ENCODE measurements at regions of chr22 and their contacts with region 1.

Region 1: GRCh38 chr22:34414484-34415440 is 494.5 kb upstream of the LARGE1 start:
- DNase-seq: peak; percentile 69
- H3K4me3 ChIP-seq: no peak overlapping the region
- H3K27ac ChIP-seq: no peak overlapping the region
- H3K4me1 ChIP-seq: no peaks in the 10 kb centered on the region
- CTCF ChIP-seq: peak; percentile 80

Region 2: GRCh38 chr22:35023692-35024363 is 609.1 kb after region 1 on chr22:
- CTCF ChIA-PET with region 1: no interaction called
- POLR2A ChIA-PET with region 1: no interaction called
- intact Hi-C with region 1: loop called (anchors 10 kb)
- DNase-seq: peak; percentile 58
- H3K4me3 ChIP-seq: no peak overlapping the region
- H3K27ac ChIP-seq: no peak overlapping the region
- H3K4me1 ChIP-seq: no peaks in the 10 kb centered on the region
- CTCF ChIP-seq: peak; percentile 97

Region 3: DNA sequence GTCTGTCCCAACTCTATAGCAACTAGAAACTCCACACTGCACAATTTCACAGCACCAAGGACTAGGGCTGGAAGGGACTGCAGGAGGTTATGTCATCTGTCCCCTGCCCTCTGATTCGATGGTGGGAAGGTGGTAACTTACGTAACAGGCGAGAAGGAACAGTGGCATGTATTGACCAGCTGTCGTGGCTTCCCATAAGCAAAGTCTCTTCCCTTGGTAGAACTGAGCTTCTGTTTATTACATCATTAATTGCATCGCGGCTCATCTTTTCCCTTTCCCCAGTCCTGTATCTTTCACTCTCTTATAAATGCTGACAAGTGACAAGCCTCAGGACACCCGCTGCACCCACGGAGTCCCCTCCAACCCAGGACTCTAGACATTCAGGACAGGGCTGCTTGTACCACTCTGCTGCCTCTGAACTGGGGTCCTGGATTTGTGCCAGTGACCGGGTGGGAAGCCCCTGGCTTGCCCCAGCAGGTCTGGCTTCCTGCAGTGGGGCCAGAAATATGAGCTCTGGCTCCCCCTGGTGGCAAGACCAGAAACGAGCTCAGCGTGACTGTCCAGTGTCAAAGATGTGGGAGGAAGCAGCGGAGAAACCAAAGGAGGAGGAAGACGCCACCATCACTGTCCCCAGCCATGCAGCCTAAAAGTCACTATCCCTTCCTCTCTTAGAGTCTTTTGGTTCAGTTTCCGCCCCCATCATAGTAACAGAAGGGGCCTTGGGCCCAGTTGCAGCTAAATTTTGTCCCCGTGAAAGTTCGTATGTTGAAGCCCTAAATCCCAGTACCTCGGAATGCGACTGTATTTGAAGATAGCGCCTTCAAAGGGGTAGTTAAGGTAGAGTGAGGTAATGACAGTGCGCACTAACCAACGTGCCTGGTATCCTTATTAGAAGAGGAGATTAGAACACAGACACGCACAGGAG is 735.7 kb after region 1 on chr22:
- CTCF ChIA-PET with region 1: no interaction called
- POLR2A ChIA-PET with region 1: no interaction called
- intact Hi-C with region 1: loop called (anchors 5 kb)
- DNase-seq: peak; percentile 67
- H3K4me3 ChIP-seq: no peak overlapping the region
- H3K27ac ChIP-seq: no peak overlapping the region
- H3K4me1 ChIP-seq: no peaks in the 10 kb centered on the region
- CTCF ChIP-seq: peak; percentile 91

Measured in OCI-LY7 (cell line).